ENCODE measurements at regions of chr1 and their contacts with region 1.

Region 1: DNA sequence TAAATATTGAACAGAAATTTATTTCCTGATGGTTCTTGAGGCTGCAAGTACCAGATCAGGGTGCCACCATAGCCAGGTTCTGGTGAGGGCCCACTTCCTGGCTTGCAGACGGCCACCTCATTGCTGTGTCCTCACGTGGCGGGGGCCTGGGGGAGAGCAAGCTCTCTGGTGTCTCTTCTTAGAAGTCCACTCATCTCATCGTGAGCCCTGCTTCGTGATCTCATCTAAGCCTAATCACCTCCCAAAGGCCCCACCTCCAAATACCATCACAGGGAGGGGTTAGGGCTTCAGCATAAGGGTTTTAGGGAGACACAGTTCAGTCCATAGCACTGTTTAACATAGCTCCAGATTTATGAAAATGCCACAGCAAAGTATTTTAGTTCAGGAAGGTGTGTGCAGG is 119.7 kb downstream of the PRDM2 start:
- DNase-seq: no peak
- H3K4me3 ChIP-seq: no peak overlapping the region
- H3K27ac ChIP-seq: no peak overlapping the region
- H3K4me1 ChIP-seq: no peaks in the 10 kb centered on the region
- H3K27me3 ChIP-seq: no peaks in the 10 kb centered on the region
- CTCF ChIP-seq: no peak
- POLR2A ChIP-seq: no peak

Region 2: GRCh38 chr1:13960375-13960987 is 140.8 kb after region 1 on chr1:
- intact Hi-C with region 1: loop called (anchors 5 kb)
- DNase-seq: peak; percentile 54 to 72
- H3K4me3 ChIP-seq: no peak overlapping the region
- H3K27ac ChIP-seq: no peak overlapping the region
- H3K4me1 ChIP-seq: no peaks in the 10 kb centered on the region
- H3K27me3 ChIP-seq: no peaks in the 10 kb centered on the region
- CTCF ChIP-seq: peak; percentile 91 to 97 (median 95)
- POLR2A ChIP-seq: no peak

Region 3: GRCh38 chr1:14194511-14194910 is 374.9 kb after region 1 on chr1:
- intact Hi-C with region 1: no loop called
- DNase-seq: no peak
- H3K4me3 ChIP-seq: no peak overlapping the region
- H3K27ac ChIP-seq: no peak overlapping the region
- H3K4me1 ChIP-seq: no peaks in the 10 kb centered on the region
- H3K27me3 ChIP-seq: no peaks in the 10 kb centered on the region
- CTCF ChIP-seq: no peak
- POLR2A ChIP-seq: no peak

Measured in breast epithelium (tissue), 4 donors.